ENCODE measurements at regions of chr2 and their contacts with region 1.

Region 1: GRCh38 chr2:18527326-18527725 is 33.1 kb downstream of the RDH14 start:
- DNase-seq: no peak
- ATAC-seq: no peak

Region 2: GRCh38 chr2:18662689-18663088 is 135.4 kb after region 1 on chr2:
- intact Hi-C with region 1: no loop called
- DNase-seq: no peak
- ATAC-seq: no peak

Region 3: GRCh38 chr2:18741895-18742732 is 214.8 kb after region 1 on chr2:
- intact Hi-C with region 1: loop called in 1 of 2 experiments (anchors 5 kb)
- DNase-seq: no peak
- ATAC-seq: no peak

Measured in left colon (tissue), 2 donors.